ENCODE measurements at regions of chr14 and their contacts with region 1.

Region 1: DNA sequence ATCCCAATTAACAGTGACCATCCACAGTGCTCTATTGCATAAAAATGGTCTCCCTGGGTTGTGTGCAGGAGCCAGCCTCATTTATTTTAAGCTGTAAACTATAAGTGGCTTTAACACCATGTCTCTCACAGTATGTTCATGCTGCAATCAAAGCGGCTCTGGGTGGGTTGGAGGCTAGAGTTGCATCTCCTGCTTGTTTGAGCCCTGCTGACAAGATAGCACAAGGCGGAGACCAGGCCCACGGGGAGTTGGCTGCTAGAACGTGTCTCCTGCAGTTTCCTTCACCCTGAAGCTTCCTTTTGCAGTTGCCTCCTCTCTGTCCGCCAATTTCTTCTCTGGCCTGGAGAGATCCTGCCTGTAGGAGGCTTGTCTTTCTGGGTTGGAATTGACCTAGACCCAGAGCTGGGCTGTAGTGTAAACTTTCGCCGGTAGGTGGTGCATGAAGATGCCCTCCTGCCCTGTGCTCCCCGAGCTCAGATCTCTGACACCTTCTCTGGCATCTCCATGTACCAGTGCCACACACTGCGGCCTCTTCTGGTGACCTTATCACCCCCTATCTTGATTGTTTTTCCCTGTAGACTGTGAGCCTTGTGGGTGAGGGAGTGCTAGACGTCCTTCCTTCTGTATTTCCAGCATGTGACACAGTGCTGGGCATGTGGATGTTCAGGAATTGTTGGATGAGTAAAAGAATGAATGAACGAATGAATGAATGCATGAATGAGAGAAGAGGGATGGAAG is 10.3 kb downstream of the OTUB2 start:
- DNase-seq: no peak
- H3K4me3 ChIP-seq: no peak overlapping the region
- CTCF ChIP-seq: peak; percentile 87

Region 2: DNA sequence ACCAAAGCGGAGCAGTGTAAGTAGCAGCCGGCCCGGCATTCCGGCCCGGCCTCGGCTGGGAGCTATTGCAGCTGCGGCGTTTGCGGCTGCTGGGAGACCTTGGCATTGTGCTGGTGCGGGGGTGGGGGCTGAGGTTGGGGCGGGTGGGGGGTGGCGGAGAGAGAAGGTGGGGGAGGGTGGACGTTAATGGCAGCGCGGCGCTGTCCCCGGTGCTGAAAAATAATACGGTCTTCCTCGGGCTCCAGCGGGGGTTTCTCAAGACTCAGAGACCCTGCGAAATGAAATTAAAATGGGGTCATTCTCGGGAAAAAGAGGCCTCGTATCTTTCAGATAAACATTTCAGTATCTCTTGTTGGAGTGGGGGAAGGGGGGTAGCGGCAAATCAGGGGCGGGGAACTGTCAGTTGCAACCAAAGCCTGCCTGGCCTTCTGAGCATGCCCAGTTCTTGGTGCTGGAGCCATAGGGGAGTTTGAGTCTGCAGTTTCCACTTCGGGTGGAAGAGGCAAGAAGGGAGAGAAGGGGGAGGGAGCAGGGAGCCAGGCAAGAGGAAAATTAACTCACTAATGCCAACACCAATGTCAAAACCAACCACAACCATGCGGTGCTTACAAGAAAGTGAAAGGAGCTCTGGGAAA is 605.3 kb before region 1 on chr14:
- CTCF ChIA-PET with region 1: no interaction called
- POLR2A ChIA-PET with region 1: no interaction called
- DNase-seq: no peak
- H3K4me3 ChIP-seq: no peak overlapping the region
- CTCF ChIP-seq: no peak

Region 3: DNA sequence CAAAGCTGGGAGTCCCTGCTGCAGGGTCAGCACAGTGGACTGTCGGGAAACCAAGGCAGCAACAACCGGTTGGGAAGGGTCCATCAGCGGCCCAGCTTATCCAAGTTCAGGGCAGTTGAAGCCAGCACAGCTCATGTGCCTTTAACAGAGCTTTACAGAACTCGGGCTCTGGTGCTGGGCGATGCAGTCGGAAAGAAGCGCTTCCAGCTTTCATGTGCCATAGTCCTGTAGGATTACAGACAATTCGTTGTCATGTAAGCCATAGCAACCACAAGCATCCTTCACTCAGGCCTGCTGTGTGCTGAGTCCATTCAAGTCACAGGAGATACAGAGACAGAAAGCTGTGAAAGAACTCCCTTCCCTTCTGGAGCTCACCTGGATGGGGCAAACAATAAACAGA is 112.9 kb before region 1 on chr14:
- CTCF ChIA-PET with region 1: no interaction called
- POLR2A ChIA-PET with region 1: no interaction called
- DNase-seq: no peak
- H3K4me3 ChIP-seq: no peak overlapping the region
- CTCF ChIP-seq: no peak

Region 4: GRCh38 chr14:94001501-94002396 is 34.7 kb before region 1 on chr14:
- CTCF ChIA-PET with region 1: interaction called, 11 read pairs
- POLR2A ChIA-PET with region 1: no interaction called
- DNase-seq: no peak
- H3K4me3 ChIP-seq: no peak overlapping the region
- CTCF ChIP-seq: peak; percentile 97

Region 5: GRCh38 chr14:94026173-94026888 is 10.2 kb before region 1 on chr14 and contains the start of gene OTUB2:
- CTCF ChIA-PET with region 1: interaction called, 135 read pairs
- POLR2A ChIA-PET with region 1: interaction called, 3 read pairs
- DNase-seq: peak; percentile 91
- H3K4me3 ChIP-seq: peak within 1 kb of the TSS; percentile 71
- CTCF ChIP-seq: no peak

Region 6: GRCh38 chr14:94056579-94057308 is 20.3 kb after region 1 on chr14:
- CTCF ChIA-PET with region 1: interaction called, 139 read pairs
- POLR2A ChIA-PET with region 1: no interaction called
- DNase-seq: no peak
- H3K4me3 ChIP-seq: no peak overlapping the region
- CTCF ChIP-seq: no peak

Region 7: GRCh38 chr14:94180655-94181271 is 144.3 kb after region 1 on chr14:
- CTCF ChIA-PET with region 1: interaction called, 33 read pairs
- POLR2A ChIA-PET with region 1: no interaction called
- DNase-seq: no peak
- H3K4me3 ChIP-seq: no peak overlapping the region; the same call in 1 of the 2 replicates
- CTCF ChIP-seq: peak; percentile 8

Region 8: DNA sequence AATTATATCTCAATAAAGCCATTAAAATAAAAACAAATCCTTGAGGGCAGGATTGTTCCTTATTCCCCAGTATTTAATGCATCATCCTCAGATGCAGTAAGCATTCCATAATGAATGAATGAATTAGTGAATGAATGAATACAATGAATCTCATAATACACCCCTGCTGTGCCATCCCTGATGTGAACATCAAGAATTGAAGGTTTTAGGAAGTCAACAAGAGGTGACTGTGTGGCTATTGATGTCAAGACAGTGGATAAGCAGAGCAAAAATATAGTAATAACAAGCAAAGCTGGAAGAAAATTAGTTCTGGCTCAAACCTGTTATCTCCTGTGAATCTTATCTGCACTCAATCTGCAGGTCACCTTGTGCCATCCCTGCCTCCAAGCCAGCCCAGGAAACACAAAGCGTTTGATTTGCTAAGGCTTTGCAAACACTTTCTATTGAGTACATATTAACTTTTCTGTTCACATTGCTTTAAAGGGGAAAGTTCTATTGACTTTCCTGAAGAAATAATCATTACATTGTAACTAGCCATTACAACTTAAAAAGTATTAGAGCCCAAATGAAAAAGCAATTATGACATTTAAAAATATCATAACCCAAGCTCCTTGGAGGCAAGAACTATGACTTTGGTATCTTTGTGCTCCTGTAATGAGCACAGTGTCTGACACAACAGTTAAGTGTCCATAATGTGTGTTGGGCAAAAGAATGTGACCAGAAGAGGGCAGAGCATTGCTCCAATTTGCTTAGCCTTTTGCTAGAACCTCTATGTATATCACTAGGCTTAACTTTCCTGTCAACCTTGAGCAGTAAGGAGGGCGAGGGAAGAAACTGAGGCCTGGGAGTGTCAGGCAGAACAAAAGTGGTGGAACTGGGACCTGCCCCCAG is 600.3 kb after region 1 on chr14:
- CTCF ChIA-PET with region 1: no interaction called
- POLR2A ChIA-PET with region 1: no interaction called
- DNase-seq: no peak
- H3K4me3 ChIP-seq: no peak overlapping the region
- CTCF ChIP-seq: no peak